Activated B cell treated with CpG ODN at 0.5 μM for 24 hours (primary cell): ENCODE measurements at regions of chr16 and their contacts with region 1.

Region 1: GRCh38 chr16:3264137-3265036 is 8.0 kb upstream of the MEFV start:
- DNase-seq: peak; percentile 95
- ATAC-seq: peak; percentile 89
- H3K4me3 Mint-ChIP-seq: peak overlapping the region; percentile 89
- H3K27ac Mint-ChIP-seq: peak overlapping the region; percentile 95
- H3K4me1 Mint-ChIP-seq: peaks cover 27% of the 10 kb centered on the region
- H3K27me3 Mint-ChIP-seq: no peaks in the 10 kb centered on the region
- CTCF ChIP-seq: no peak

Region 2: GRCh38 chr16:3457434-3458252 is 193.3 kb after region 1 on chr16:
- CTCF ChIA-PET with region 1: interaction called, 5 read pairs
- POLR2A ChIA-PET with region 1: interaction called, 11 read pairs
- intact Hi-C with region 1: loop called (anchors 1 kb)
- DNase-seq: peak; percentile 91
- ATAC-seq: peak; percentile 90
- H3K4me3 Mint-ChIP-seq: peak overlapping the region; percentile 82
- H3K27ac Mint-ChIP-seq: peak overlapping the region; percentile 85
- H3K4me1 Mint-ChIP-seq: peaks cover 44% of the 10 kb centered on the region
- H3K27me3 Mint-ChIP-seq: no peaks in the 10 kb centered on the region
- CTCF ChIP-seq: no peak

Region 3: DNA sequence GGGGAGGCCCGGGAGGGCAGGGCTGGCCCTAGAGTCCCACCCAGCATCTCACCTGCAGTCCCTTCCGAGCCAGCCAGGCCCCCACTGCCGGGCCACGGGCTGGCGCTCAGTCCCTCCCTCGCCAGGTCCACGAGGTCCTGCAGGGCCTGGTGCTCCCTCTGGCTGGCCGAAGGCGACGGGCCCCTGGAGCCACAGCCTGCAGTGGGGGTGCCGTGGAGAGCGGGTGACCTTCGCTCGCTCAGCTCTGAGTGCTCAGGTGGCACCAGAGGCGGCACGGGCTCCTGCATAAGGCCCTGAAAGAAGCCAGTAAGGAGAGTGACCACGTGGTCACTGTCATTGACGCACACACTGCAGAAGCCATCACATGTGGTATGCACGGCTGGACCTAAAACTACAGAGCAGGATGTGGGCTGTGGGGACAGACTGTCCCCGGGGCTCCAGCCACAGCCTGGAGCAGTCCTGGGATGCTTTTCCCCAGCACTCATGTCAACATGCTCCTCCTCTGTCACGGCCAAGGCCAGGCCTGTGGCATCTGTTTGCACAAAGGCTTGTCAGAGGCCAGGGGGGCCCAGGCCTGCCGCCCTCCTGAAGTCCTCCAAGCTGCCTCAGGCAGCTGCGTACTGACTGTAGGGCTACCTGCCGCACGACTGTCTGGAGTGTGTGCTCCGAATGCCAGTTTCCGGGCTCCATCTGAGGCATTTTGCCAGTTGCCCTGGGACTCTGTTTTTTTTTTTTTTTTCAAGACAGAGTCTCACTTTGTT is 331.9 kb after region 1 on chr16:
- CTCF ChIA-PET with region 1: no interaction called
- POLR2A ChIA-PET with region 1: no interaction called
- intact Hi-C with region 1: no loop called
- DNase-seq: no peak
- ATAC-seq: no peak
- H3K4me3 Mint-ChIP-seq: no peak overlapping the region
- H3K27ac Mint-ChIP-seq: no peak overlapping the region
- H3K4me1 Mint-ChIP-seq: no peaks in the 10 kb centered on the region
- H3K27me3 Mint-ChIP-seq: no peaks in the 10 kb centered on the region
- CTCF ChIP-seq: no peak